ENCODE measurements at regions of chr5 and their contacts with region 1.

Region 1: DNA sequence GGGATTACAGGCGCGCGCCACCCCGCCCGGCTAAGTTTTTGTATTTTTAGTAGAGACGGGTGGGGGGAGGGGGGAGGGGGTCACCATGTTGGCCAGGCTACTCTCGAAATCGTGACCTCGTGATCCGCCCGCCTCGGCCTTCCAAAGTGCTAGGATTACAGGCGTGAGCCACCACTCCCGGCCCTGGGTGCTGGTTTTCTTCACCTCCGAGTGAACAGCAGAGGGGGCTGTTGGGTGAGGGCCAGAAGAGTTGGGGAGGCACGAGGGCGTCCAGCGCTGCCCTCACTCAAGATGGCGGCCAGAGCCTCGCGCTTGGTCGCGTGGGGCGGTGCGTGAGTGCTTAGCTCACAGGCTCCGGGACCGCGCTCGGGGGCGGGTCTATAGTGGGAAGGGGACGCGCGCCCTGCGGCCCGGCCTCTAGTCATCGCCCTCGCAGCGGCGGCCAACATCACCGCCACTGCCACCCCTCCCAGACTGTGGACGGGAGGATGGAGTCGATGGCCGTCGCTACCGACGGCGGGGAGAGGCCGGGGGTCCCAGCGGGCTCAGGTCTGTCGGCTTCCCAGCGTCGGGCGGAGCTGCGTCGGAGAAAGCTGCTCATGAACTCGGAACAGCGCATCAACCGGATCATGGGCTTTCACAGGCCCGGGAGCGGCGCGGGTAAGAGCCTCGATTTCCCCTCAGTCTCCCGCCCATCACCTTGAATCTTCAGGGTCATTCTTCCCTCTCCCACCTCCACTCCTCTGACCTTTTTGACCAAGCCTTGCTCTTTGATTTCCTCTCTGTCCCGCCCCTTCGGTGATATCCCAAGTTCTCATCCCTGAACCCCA is at the start of gene CAMLG:
- DNase-seq: peak; percentile 98 to 99 (median 99)
- ATAC-seq: peak; percentile 99 to 100 (median 100)
- H3K4me3 ChIP-seq: peak within 1 kb of the TSS; percentile 75 to 97 (median 88)
- H3K27ac ChIP-seq: peak within 1 kb of the TSS; percentile 78 to 96 (median 92)
- H3K4me1 ChIP-seq: peaks cover 0 to 30% (median 12%) of the 10 kb centered on the region in 12 donors
- H3K27me3 ChIP-seq: no peaks in the 10 kb centered on the region
- CTCF ChIP-seq: peak; percentile 40 to 76 (median 61)
- POLR2A ChIP-seq: peak; percentile 42 to 93
- total RNA-seq, gene CAMLG: 11.6 to 20.9 (median 17.6) TPM

Region 2: GRCh38 chr5:134609232-134609851 is 129.0 kb before region 1 on chr5:
- intact Hi-C with region 1: no loop called
- DNase-seq: no peak
- ATAC-seq: peak in 1 of 4 donors; percentile 20
- H3K4me3 ChIP-seq: no peak overlapping the region
- H3K27ac ChIP-seq: peak overlapping the region in 4 of 12 donors; percentile 19 to 32 (median 24)
- H3K4me1 ChIP-seq: peaks cover 0 to 14% (median 0%) of the 10 kb centered on the region in 12 donors
- H3K27me3 ChIP-seq: no peaks in the 10 kb centered on the region
- CTCF ChIP-seq: no peak
- POLR2A ChIP-seq: no peak

Region 3: DNA sequence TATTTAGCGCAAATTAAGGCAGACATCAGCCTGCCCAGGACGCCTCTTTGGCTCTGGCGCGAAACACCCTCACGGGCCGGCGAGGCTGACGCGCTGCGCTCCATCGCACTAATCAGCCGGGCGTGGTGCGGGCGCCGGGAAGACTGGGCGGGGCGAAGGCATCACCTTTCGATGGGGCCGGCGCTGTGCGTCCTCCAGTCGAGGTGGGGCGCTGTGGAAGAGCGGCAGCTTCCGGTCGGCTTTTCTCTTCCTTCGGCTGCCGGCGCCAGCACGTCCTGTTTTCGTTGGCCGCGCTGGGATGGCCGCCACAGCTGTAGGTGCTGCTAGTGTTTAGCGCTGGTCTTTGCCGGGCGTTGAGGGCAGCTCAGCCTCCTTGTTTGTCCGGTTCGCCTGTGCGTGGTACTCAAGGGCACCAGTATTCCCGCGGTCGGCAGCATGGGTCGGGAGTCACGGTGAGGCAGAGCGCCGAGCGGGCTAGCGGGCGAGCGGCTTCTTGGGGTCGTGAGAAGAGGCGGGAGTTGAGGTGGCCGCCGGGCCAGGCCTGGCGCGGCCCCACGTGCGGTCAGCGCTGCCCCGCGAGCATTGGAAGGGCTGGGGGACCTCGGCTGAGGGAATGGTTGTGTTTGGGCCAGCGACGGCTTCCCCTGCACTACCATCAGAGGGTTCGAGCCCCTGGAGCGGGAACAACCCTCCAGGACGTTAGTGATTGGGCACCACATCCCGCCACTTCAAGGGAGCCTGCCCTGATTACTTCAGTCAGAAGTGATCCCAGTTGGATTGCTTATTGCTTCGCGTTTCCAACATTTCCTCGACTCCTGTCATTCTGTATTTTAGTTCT is 20.4 kb after region 1 on chr5 and contains the start of gene DDX46:
- intact Hi-C with region 1: loop called in 1 of 10 experiments (anchors 2 kb)
- DNase-seq: peak; percentile 91 to 96 (median 94)
- ATAC-seq: peak; percentile 95 to 99 (median 99)
- H3K4me3 ChIP-seq: peak within 1 kb of the TSS; percentile 62 to 98 (median 80)
- H3K27ac ChIP-seq: peak within 1 kb of the TSS in 11 of 12 donors; percentile 51 to 86 (median 67)
- H3K4me1 ChIP-seq: peaks cover 0 to 28% (median 19%) of the 10 kb centered on the region in 12 donors
- H3K27me3 ChIP-seq: no peaks in the 10 kb centered on the region
- CTCF ChIP-seq: peak; percentile 55 to 95 (median 78)
- POLR2A ChIP-seq: peak in 1 of 2 donors; percentile 74
- total RNA-seq, gene DDX46: 14.3 to 37.0 (median 28.8) TPM

Region 4: GRCh38 chr5:134769206-134769605 is 30.9 kb after region 1 on chr5:
- intact Hi-C with region 1: no loop called
- DNase-seq: no peak
- ATAC-seq: no peak
- H3K4me3 ChIP-seq: no peak overlapping the region
- H3K27ac ChIP-seq: no peak overlapping the region
- H3K4me1 ChIP-seq: no peaks in the 10 kb centered on the region
- H3K27me3 ChIP-seq: no peaks in the 10 kb centered on the region
- CTCF ChIP-seq: no peak
- POLR2A ChIP-seq: no peak